ENCODE measurements at regions of chr3 and their contacts with region 1.

Region 1: GRCh38 chr3:72634128-72634527 is 214.1 kb downstream of the SHQ1 start:
- DNase-seq: peak; percentile 19
- H3K4me3 Mint-ChIP-seq: no peak overlapping the region
- H3K27ac Mint-ChIP-seq: no peak overlapping the region
- H3K4me1 Mint-ChIP-seq: peaks cover 39% of the 10 kb centered on the region
- H3K27me3 Mint-ChIP-seq: peaks cover 10% of the 10 kb centered on the region

Region 2: GRCh38 chr3:71984843-71985613 is 649.1 kb before region 1 on chr3:
- CTCF ChIA-PET with region 1: no interaction called
- intact Hi-C with region 1: loop called (anchors 1 kb)
- DNase-seq: peak; percentile 76
- H3K4me3 Mint-ChIP-seq: peak overlapping the region; percentile 48
- H3K27ac Mint-ChIP-seq: peak overlapping the region; percentile 84
- H3K4me1 Mint-ChIP-seq: peaks cover 43% of the 10 kb centered on the region
- H3K27me3 Mint-ChIP-seq: peaks cover 6% of the 10 kb centered on the region

Region 3: GRCh38 chr3:72339116-72340030 is 294.8 kb before region 1 on chr3:
- CTCF ChIA-PET with region 1: no interaction called
- intact Hi-C with region 1: loop called (anchors 1 kb)
- DNase-seq: no peak
- H3K4me3 Mint-ChIP-seq: no peak overlapping the region
- H3K27ac Mint-ChIP-seq: no peak overlapping the region
- H3K4me1 Mint-ChIP-seq: peaks cover 36% of the 10 kb centered on the region
- H3K27me3 Mint-ChIP-seq: no peaks in the 10 kb centered on the region

Region 4: DNA sequence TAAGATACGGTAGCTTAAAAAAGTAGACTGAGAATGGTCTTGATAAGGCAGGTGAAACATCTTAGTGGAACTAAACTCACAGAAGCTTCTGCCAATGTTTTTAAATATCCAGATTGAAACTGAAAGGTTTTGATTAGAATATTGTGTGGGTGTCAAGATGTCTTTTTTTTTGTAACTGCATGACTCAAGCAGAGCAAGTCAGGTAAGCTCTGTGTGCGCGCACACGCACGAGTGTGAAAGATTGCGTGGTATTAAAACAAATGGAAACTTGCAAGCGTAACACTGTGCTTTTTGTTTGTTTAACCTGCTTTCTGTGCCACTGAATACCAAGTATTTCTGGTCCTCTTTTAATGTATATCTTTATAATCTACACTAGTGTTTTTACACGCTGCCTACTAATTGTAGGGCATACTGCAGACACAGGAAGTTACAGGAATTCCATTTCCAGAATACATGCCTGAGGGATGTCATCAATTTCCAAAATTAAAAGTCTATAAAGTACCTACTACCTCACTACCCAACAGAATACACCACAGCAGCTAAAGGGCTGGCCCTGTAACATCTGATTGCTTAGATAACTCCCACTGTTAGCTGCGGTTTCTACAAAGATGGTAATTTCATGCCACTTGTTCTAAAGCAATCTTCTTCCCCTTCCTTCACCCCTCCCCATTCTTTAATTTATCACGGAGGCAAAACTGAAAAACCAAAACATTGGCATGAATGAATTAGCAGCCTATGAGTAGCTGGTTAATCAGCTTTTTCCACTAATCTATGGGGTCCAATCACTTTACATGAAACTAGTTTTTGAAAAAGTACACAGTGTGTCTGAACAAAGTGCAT is 258.7 kb before region 1 on chr3:
- CTCF ChIA-PET with region 1: no interaction called
- intact Hi-C with region 1: loop called (anchors 1 kb)
- DNase-seq: peak; percentile 70
- H3K4me3 Mint-ChIP-seq: peak overlapping the region; percentile 20
- H3K27ac Mint-ChIP-seq: peak overlapping the region; percentile 82
- H3K4me1 Mint-ChIP-seq: peaks cover 62% of the 10 kb centered on the region
- H3K27me3 Mint-ChIP-seq: no peaks in the 10 kb centered on the region

Region 5: DNA sequence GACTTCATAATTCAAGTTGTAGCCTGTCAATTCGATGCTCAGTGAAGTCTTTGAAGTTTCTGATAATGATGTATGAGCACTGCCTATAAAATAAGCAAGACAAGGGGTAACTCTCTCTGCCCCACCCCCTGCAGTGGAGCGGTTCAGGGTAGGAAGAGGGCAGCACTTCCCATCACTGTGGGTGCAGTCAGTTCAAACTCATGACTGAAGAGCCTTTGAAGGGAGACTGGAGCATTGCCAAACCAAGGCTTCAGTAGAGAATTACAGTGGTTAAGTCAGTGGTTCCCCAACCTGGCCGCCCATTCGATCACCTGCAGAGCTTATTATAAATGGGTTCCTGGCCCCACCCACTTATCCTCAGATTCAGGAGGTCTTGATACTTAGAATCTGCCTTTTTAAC is 23.5 kb after region 1 on chr3:
- CTCF ChIA-PET with region 1: interaction called, 5 read pairs
- intact Hi-C with region 1: loop called (anchors 1 kb)
- DNase-seq: peak; percentile 83
- H3K4me3 Mint-ChIP-seq: no peak overlapping the region
- H3K27ac Mint-ChIP-seq: no peak overlapping the region
- H3K4me1 Mint-ChIP-seq: peaks cover 23% of the 10 kb centered on the region
- H3K27me3 Mint-ChIP-seq: peaks cover 13% of the 10 kb centered on the region

Region 6: GRCh38 chr3:72679540-72680198 is 45.5 kb after region 1 on chr3:
- CTCF ChIA-PET with region 1: no interaction called
- intact Hi-C with region 1: no loop called
- DNase-seq: no peak
- H3K4me3 Mint-ChIP-seq: no peak overlapping the region
- H3K27ac Mint-ChIP-seq: no peak overlapping the region
- H3K4me1 Mint-ChIP-seq: peaks cover 13% of the 10 kb centered on the region
- H3K27me3 Mint-ChIP-seq: no peaks in the 10 kb centered on the region

Region 7: DNA sequence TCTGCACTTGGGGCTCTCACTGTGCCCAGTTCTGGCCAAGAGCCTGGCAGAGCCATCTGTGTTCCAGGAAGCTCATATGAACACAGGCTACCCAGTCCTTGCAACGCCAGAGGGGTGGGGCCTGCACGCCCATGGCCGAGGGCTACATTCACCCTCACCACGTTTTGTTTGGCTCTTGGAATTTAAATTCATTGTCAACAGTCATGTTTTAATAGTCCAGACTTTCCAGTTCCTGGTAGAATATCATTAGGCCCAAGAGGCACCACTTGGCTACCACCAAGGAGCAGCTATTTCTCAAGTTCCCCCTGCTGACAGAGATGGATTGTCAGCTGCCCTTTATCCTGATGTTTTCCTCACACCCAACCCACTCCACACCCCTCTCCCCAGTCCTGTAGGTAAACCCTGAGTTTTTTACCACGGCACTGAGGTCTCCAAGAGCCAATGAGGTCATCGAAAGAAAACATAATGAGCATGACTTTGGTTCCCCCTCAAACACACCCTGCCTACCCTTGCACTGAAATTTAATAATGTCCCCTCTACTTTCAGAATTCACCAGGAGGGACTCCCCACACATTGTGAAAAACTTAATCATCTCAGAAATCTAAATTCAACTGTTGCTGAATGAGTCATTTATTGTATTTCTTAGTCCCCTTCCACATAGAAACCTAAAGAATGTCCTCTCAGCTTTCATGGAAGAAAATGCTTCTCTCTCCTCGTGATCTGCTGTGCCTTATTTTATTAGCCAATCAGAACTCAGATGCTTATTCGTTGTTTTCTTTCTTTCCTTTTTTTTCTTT is 89.0 kb after region 1 on chr3:
- CTCF ChIA-PET with region 1: no interaction called
- intact Hi-C with region 1: loop called (anchors 1 kb)
- DNase-seq: peak; percentile 27
- H3K4me3 Mint-ChIP-seq: no peak overlapping the region
- H3K27ac Mint-ChIP-seq: no peak overlapping the region
- H3K4me1 Mint-ChIP-seq: peaks cover 17% of the 10 kb centered on the region
- H3K27me3 Mint-ChIP-seq: no peaks in the 10 kb centered on the region

Measured in activated naive CD4-positive, alpha-beta T cell treated with anti-CD3 and anti-CD28 coated beads for 36 hours (primary cell).